ENCODE measurements at regions of chr6 and their contacts with region 1.

Region 1: GRCh38 chr6:10747251-10747972 is at the start of gene TMEM14B:
- DNase-seq: peak; percentile 100
- H3K4me3 Mint-ChIP-seq: peak within 1 kb of the TSS; percentile 90
- H3K27ac Mint-ChIP-seq: peak within 1 kb of the TSS; percentile 88
- H3K4me1 Mint-ChIP-seq: peaks cover 43% of the 10 kb centered on the region
- H3K27me3 Mint-ChIP-seq: no peaks in the 10 kb centered on the region
- total RNA-seq, gene TMEM14B: 94.0 and 98.0 TPM in 2 replicates

Region 2: GRCh38 chr6:10528170-10528981 is 219.0 kb before region 1 on chr6:
- intact Hi-C with region 1: loop called (anchors 5 kb)
- DNase-seq: peak; percentile 81
- H3K4me3 Mint-ChIP-seq: peak overlapping the region; percentile 92
- H3K27ac Mint-ChIP-seq: peak overlapping the region; percentile 89
- H3K4me1 Mint-ChIP-seq: peaks cover 48% of the 10 kb centered on the region
- H3K27me3 Mint-ChIP-seq: no peaks in the 10 kb centered on the region

Region 3: DNA sequence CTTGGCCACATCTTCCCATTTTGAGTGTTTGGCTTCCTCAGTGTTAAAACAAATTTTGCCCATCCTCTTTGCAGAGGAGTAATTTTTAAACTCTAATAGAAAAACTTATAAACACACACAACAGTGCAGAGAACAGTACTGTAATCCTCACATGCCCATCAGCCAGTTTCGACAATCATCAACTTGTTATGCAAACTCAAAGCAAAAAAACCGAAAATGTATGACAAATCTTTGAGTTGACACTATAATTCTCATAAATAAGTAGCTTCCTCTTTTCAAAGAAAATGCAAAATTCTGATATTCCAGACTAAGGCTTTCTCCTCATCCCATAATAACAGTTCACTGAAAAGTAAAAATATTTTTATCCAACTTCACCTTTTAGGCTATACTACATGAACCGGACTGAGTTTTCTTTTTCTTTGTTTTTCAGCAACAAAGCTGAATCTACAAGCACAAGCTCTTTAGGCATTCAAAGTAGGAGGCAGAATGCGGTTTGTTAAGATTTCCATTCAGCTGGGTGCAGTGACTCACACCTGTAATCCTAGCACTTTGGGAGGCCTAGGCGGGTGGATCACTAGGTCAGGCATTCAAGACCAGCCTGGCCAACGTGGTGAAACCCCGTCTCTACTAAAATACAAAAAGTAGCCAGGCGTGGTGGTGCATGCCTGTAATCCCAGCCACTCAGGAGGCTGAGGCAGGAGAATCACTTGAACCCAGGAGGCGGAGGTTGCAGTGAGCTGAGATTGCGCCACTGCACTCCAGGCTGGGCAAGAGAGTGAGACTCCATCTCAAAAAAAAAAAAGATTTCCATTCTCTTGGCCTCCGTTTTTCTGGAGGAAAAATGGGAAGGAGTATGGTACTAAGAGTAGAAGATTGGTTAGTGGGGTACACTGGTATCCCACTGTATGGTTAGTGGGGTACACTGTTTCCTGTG is 151.4 kb before region 1 on chr6:
- intact Hi-C with region 1: no loop called
- DNase-seq: no peak
- H3K4me3 Mint-ChIP-seq: no peak overlapping the region
- H3K27ac Mint-ChIP-seq: no peak overlapping the region
- H3K4me1 Mint-ChIP-seq: peaks cover 8% of the 10 kb centered on the region
- H3K27me3 Mint-ChIP-seq: no peaks in the 10 kb centered on the region

Region 4: GRCh38 chr6:10722820-10723566 is 24.4 kb before region 1 on chr6 and contains the start of gene TMEM14C:
- intact Hi-C with region 1: loop called (anchors 1 kb)
- DNase-seq: peak; percentile 97
- H3K4me3 Mint-ChIP-seq: peak within 1 kb of the TSS; percentile 89
- H3K27ac Mint-ChIP-seq: peak within 1 kb of the TSS; percentile 93
- H3K4me1 Mint-ChIP-seq: peaks cover 27% of the 10 kb centered on the region
- H3K27me3 Mint-ChIP-seq: no peaks in the 10 kb centered on the region
- total RNA-seq, gene TMEM14C: 65.0 and 67.7 TPM in 2 replicates